ENCODE measurements at regions of chr5 and their contacts with region 1.

Region 1: GRCh38 chr5:55711968-55712859 is at the start of gene SLC38A9:
- DNase-seq: peak; percentile 96
- H3K4me3 ChIP-seq: peak within 1 kb of the TSS; percentile 79
- H3K27ac ChIP-seq: peak within 1 kb of the TSS; percentile 50
- H3K4me1 ChIP-seq: no peaks in the 10 kb centered on the region
- H3K27me3 ChIP-seq: no peaks in the 10 kb centered on the region
- CTCF ChIP-seq: no peak
- total RNA-seq, gene SLC38A9: 21.0 and 22.1 TPM in 2 replicates

Region 2: GRCh38 chr5:55187370-55187769 is 524.8 kb before region 1 on chr5:
- CTCF ChIA-PET with region 1: no interaction called
- POLR2A ChIA-PET with region 1: interaction called, 10 read pairs
- intact Hi-C with region 1: no loop called
- DNase-seq: peak; percentile 44
- H3K4me3 ChIP-seq: no peak overlapping the region
- H3K27ac ChIP-seq: no peak overlapping the region
- H3K4me1 ChIP-seq: no peaks in the 10 kb centered on the region
- H3K27me3 ChIP-seq: peaks cover 17% of the 10 kb centered on the region
- CTCF ChIP-seq: peak; percentile 51

Region 3: DNA sequence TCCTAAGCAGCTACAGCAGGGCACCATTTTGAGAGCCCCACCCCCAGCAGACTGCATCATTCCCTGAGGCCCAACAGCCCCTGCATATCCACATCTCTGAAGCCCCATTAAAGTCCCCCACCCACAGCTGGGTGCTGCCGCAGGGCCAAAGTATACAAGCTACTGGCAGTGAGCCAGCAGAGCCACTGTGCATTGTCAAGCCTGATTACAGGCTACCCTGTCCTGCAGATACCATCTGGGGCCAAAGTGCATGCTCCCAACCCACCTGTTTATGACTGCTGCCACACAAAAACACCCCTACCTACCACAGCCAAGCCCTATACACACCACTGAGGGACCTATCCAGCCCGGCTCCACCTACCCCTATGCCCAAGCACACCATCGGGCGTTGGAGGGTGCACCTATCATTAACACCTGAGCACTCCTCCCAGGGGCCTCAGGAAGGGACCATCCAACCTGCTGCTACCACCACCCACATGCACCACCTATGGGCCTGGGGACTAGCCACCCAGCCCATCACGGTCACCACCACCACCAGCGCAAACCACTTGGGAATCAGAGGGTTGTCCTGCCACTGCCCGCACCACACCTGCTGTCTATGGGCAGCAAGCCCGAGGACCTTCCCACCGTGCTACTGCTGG is 282.5 kb before region 1 on chr5:
- CTCF ChIA-PET with region 1: no interaction called
- POLR2A ChIA-PET with region 1: no interaction called
- intact Hi-C with region 1: no loop called
- DNase-seq: no peak
- H3K4me3 ChIP-seq: no peak overlapping the region
- H3K27ac ChIP-seq: no peak overlapping the region
- H3K4me1 ChIP-seq: peaks cover 4% of the 10 kb centered on the region
- H3K27me3 ChIP-seq: no peaks in the 10 kb centered on the region
- CTCF ChIP-seq: no peak